MCF 10A (cell line): ENCODE measurements at regions of chr1 and their contacts with region 1.

Region 1: DNA sequence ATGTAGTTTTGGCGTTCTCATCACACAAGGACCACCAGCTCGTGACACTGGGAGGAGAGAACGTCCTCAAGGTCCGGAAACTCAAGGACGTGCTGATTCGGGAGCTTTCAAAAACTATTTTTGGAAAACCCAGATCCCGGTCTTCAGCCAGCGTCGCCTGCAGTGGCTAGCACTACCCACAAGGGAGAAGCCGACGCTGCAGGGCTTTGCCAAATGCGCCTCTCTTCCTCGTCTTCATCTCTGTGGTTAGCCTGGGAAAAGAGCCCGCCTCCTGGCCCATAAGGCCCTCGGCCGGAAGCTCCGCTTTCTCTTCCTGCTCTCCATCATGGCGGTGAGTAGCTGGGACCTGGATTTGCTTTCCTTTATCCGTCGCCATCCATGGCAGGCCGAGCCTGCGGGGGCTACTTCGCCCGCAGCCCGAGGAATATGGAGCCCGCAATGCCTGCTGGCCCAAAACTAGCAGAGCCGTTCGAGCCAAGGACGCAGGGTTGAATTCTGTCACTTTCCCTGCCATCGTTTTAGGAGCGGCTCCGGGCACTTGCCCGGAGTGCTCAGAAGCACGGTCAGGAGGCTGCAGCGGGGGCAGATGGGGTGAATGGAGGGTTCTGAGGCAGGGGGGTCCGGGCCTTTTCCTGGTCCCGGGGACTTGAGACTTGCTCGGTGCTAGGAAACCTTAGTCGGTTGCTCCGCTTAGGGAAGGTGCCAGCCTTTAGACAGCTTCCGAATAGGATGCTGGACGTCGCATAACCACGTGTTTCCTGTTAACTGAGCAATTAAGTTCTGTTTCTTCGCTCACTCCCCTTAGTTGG is at the start of gene RPL11:
- DNase-seq: peak; percentile 96
- H3K4me3 Mint-ChIP-seq: peak within 1 kb of the TSS; percentile 88
- H3K27ac Mint-ChIP-seq: peak within 1 kb of the TSS; percentile 97
- H3K4me1 Mint-ChIP-seq: peaks cover 35% of the 10 kb centered on the region
- H3K27me3 Mint-ChIP-seq: no peaks in the 10 kb centered on the region
- CTCF ChIP-seq: peak; percentile 44
- total RNA-seq, gene RPL11: 1,201 and 1,563 TPM in 2 replicates

Region 2: GRCh38 chr1:22447611-22448111 is 1244.0 kb before region 1 on chr1:
- CTCF ChIA-PET with region 1: no interaction called
- POLR2A ChIA-PET with region 1: no interaction called
- intact Hi-C with region 1: no loop called
- DNase-seq: peak; percentile 17
- H3K4me3 Mint-ChIP-seq: no peak overlapping the region
- H3K27ac Mint-ChIP-seq: no peak overlapping the region
- H3K4me1 Mint-ChIP-seq: peaks cover 4% of the 10 kb centered on the region
- H3K27me3 Mint-ChIP-seq: peaks cover 11% of the 10 kb centered on the region
- CTCF ChIP-seq: no peak

Region 3: GRCh38 chr1:23673086-23673813 is 18.5 kb before region 1 on chr1:
- CTCF ChIA-PET with region 1: interaction called, 4 read pairs
- POLR2A ChIA-PET with region 1: interaction called, 20 read pairs
- intact Hi-C with region 1: no loop called
- DNase-seq: peak; percentile 94
- H3K4me3 Mint-ChIP-seq: no peak overlapping the region
- H3K27ac Mint-ChIP-seq: no peak overlapping the region
- H3K4me1 Mint-ChIP-seq: peaks cover 6% of the 10 kb centered on the region
- H3K27me3 Mint-ChIP-seq: peaks cover 9% of the 10 kb centered on the region
- CTCF ChIP-seq: no peak

Region 4: GRCh38 chr1:23704834-23705495 is 13.3 kb after region 1 on chr1:
- CTCF ChIA-PET with region 1: interaction called, 10 read pairs
- POLR2A ChIA-PET with region 1: interaction called, 14 read pairs
- intact Hi-C with region 1: no loop called
- DNase-seq: no peak
- H3K4me3 Mint-ChIP-seq: no peak overlapping the region
- H3K27ac Mint-ChIP-seq: no peak overlapping the region
- H3K4me1 Mint-ChIP-seq: peaks cover 6% of the 10 kb centered on the region
- H3K27me3 Mint-ChIP-seq: no peaks in the 10 kb centered on the region
- CTCF ChIP-seq: no peak